Cardiac septum (tissue), 1 donor: ENCODE measurements at regions of chr13 and their contacts with region 1.

Region 1: DNA sequence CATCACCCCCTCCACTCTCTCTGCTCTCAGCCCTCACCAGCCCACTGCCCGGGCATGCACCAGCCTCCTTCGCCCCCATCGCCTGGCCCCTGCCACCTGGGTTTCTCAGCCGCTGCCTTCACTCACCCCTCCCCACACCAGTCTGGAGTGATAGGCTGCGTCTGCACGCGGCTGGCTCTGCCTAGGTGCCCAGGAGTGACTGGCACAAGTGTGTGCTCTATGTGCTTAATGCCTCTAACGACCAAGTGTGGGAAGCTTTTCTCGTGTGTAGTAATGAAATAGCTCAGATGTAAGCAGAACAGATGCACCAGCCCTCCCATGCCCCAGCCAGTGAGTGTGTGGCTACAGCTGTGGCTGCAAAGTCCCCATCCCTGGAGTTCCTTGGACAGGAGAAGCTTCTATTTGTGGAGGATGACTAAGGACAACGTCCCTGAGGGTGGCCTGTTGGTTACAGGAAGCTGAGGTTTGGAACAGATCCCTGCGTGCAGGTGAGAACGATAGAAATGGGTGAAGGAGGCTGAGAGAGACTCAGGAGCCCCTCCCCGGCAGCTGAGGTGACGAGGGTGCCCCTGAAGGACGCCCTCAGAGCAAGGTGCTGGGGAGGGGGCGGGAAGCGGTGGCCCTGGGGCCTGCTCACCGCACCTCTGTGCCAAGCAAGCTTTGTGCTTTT is 35.6 kb downstream of the ATP11A start:
- DNase-seq: no peak

Region 2: DNA sequence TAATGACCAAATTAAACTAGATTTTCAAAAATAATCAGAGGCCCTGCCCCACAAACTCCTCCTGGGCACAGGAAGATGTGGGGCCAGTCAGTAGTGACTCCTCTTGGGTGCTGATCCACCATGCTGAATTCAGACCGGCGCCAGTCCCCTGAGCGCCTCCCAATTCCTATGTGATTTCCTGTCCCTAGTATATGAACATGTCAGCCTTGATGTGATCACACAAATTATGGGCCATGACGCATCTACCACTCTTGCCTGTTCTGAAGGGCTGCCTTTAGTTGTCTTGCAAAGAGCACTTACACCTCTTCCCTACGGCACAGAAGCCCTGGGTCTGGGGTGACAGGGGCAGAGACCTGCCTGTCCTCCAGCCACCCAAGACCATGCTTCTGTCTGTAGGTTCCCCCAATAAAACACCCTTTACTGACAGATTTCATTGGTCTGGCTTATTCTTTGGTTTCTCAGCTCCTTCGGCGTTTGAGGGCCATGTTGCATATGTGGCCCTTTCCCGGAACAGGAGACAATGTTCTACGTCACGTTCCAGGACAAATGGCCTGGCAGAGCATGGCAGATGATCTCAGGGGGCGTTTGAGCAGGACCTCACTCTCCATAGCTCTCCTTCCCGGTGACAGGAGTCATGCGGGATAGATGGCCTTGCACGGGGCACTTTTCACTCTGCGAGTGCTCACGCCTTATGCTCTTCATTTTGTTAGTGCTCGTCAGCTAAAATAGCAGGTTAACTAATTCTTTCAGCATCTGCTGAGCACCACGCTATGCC is 41.2 kb before region 1 on chr13:
- intact Hi-C with region 1: no loop called
- DNase-seq: no peak

Region 3: GRCh38 chr13:112771877-112772538 is 46.5 kb after region 1 on chr13:
- intact Hi-C with region 1: loop called (anchors 2 kb)
- DNase-seq: no peak